ENCODE measurements at regions of chr5 and their contacts with region 1.

Region 1: GRCh38 chr5:926417-927171 is 33.9 kb downstream of the TRIP13 start:
- DNase-seq: no peak

Region 2: DNA sequence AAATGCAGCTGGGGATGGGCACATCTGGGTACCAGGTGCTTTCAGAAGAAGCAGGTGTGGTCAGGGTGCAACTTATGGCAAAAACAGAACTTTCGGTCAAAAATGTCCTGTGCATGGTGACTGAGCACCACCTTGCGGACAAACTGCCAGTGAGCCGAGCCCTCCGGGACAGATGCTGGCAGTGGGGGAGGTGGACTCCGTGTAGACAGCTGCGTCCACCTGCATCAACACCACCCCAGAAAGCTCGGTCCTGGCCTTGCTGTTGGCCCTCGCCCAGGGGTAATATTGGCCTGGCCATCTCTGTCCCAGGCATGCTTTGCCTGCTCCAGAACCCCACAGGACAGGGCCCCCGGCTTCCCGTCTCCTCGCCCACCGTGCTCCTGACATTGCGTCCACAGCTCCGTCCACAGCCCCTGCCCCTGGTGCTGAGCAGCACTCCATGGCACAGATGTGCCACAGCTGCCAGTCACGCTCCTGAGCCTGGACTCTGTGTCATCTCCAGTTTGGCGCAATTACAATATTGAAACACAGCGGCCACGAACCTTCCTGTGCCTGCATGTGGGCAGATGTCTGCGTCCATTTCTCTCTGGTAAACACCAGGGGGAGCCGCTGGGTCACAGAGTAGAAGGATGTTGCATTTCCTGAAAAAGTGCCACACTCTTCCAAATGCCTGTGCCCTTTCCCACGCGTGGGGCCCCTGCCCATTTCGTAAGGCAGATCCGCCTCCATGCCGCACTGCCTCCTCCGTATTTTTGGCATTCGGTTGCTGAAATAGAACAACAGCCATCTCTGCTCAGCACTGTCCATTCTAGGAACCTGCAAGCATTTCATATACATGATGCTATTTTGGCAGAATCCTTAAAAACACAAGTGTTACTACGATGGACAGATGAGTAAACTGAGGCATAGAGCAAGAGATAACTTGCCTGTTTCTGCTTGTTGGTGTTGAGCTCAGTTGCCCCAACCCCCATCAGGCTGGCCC is 241.4 kb after region 1 on chr5:
- in situ Hi-C with region 1: loop called (anchors 25 kb)
- DNase-seq: peak; percentile 86

Measured in SK-MEL-5 (cell line).